Dorsolateral prefrontal cortex (tissue), 120 donors: ENCODE measurements at regions of chr18 and their contacts with region 1.

Region 1: DNA sequence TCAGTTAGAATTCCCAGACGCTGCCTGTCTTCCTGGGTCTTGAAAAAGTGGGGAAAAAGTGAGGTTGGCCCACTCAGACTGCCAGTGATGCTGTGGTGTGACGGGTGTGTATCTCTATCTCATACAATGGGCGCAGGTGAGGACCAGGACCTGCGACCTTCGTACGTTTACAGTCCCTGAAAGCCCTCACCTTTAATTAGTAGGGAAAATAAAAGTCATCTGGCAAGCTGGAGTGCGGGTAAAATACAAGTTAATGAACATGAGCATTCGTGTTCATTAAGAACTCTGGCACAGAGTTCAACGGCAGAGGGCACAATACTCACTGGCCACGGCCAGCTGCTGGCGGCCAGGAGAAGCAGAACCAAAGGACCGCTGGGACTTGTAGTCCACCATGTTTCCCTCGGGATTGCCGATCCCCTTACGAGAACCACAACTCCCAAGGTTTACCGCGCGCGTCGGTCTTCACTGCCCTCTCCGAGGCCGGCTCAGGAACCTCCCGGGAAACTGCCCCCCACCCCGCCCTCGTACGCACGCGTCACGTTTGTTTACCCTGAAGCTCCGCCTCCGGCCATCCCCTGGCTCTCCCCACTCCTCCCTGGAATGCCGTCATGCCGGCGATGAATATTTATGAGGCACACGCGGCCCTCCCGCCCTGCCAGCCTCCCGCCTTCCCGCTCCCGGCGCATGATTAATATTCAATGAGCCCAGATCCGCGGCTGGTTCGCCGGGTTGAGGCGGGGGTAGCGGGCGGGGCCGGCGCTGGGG is 488 bp upstream of the PHLPP1 start:
- DNase-seq: peak; percentile 99 to 100 (median 100)
- H3K4me3 ChIP-seq: peak overlapping the region; percentile 39 to 91 (median 72)
- H3K27ac ChIP-seq: peak overlapping the region; percentile 77 to 98 (median 93)
- H3K27me3 ChIP-seq: no peaks in the 10 kb centered on the region
- CTCF ChIP-seq: peak; percentile 71 to 98 (median 90)

Region 2: DNA sequence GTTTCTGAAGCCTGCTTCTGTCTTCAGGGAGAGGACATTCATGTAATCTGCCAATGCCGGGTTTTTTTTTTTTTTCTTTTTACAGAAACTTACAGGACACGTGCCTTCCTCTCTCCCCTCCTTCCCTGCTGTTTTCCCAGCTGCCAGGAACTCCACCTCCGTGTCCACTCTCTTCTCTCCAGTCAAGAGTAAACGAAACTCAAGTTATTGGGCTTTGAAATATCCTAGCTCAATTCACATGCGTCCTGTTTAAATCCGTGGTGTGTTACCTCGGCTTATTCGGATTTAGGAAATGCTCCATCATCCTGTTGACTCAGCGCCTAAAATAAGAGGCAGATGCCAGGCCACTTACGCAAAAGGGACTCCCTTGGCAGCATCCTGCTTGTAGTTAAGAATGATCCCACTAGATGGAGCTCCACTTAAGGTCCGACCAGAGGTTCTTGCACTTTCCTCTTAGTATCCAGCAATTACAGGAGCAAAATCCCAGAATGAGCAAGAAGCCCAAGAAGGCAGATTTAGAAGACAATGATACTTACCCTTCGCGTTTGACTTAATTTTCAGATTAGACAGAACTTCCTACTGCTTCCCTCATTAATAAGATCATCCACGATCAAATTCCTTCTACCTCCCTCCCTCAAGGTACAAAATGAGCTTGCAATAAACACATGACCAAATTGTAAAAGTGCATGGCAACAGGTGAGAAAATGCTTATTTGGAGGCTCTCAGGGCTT is 289.2 kb before region 1 on chr18:
- intact Hi-C with region 1: loop called in 1 of 2 experiments (anchors 5 kb)
- DNase-seq: peak in 8 of 10 donors; percentile 57 to 87 (median 66)
- H3K4me3 ChIP-seq: peak overlapping the region in 57 of 59 donors; percentile 12 to 61 (median 43)
- H3K27ac ChIP-seq: peak overlapping the region in 42 of 59 donors; percentile 1 to 80 (median 57)
- H3K27me3 ChIP-seq: no peaks in the 10 kb centered on the region
- CTCF ChIP-seq: peak; percentile 77 to 95 (median 88)

Region 3: GRCh38 chr18:62584241-62585120 is 130.4 kb before region 1 on chr18:
- intact Hi-C with region 1: loop called (anchors 1 to 2 kb)
- DNase-seq: peak; percentile 80 to 93 (median 86)
- H3K4me3 ChIP-seq: peak overlapping the region in 23 of 59 donors; percentile 7 to 48 (median 27)
- H3K27ac ChIP-seq: peak overlapping the region in 56 of 59 donors; percentile 7 to 84 (median 68)
- H3K27me3 ChIP-seq: no peaks in the 10 kb centered on the region
- CTCF ChIP-seq: peak; percentile 86 to 100 (median 98)

Region 4: DNA sequence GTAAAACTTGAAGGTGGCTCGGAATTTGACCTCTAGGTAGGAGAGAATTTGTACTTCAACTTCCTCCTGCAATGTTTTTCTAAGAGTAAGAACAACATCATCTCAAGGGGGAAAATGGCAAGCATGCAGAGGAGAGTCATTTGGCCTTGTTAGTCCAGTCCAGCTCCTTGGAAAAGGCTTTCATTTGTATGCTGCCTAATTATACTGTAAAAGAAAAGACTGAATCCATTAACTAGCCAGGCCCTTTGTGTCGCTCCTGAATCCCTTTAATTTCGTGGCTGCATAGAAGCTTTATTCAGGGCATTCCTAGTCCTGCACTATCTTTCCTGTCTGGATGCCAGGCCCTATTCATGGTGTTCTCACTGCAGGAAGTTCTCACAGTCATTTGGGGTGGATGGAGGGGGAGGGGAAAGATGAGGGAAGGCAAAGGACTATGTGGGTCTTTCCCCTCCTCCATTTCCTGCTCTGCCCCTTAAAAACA is 36.5 kb after region 1 on chr18:
- intact Hi-C with region 1: loop called in 1 of 2 experiments (anchors 5 kb)
- DNase-seq: peak in 2 of 10 donors; percentile 47 to 59
- H3K4me3 ChIP-seq: peak overlapping the region in 28 of 59 donors; percentile 1 to 47 (median 22)
- H3K27ac ChIP-seq: peak overlapping the region in 53 of 59 donors; percentile 0 to 81 (median 59)
- H3K27me3 ChIP-seq: no peaks in the 10 kb centered on the region
- CTCF ChIP-seq: no peak

Region 5: GRCh38 chr18:62802523-62802922 is 87.7 kb after region 1 on chr18:
- intact Hi-C with region 1: loop called in 1 of 2 experiments (anchors 5 kb)
- DNase-seq: no peak
- H3K4me3 ChIP-seq: no peak overlapping the region
- H3K27ac ChIP-seq: peak overlapping the region in 31 of 59 donors; percentile 1 to 74 (median 38)
- H3K27me3 ChIP-seq: no peaks in the 10 kb centered on the region
- CTCF ChIP-seq: peak in 35 of 56 donors; percentile 4 to 59 (median 33)

Region 6: GRCh38 chr18:62982600-62983251 is 267.9 kb after region 1 on chr18:
- intact Hi-C with region 1: loop called (anchors 1 to 2 kb)
- DNase-seq: peak in 9 of 10 donors; percentile 63 to 83 (median 69)
- H3K4me3 ChIP-seq: peak overlapping the region in 47 of 59 donors; percentile 3 to 56 (median 37)
- H3K27ac ChIP-seq: peak overlapping the region; percentile 13 to 99 (median 93)
- H3K27me3 ChIP-seq: no peaks in the 10 kb centered on the region
- CTCF ChIP-seq: peak; percentile 68 to 96 (median 88)

Region 7: GRCh38 chr18:62999392-62999791 is 284.5 kb after region 1 on chr18:
- intact Hi-C with region 1: no loop called
- DNase-seq: no peak
- H3K4me3 ChIP-seq: no peak overlapping the region
- H3K27ac ChIP-seq: no peak overlapping the region
- H3K27me3 ChIP-seq: peaks cover 0 to 2% (median 0%) of the 10 kb centered on the region in 45 donors
- CTCF ChIP-seq: no peak